Activated naive CD4-positive, alpha-beta T cell treated with anti-CD3 and anti-CD28 coated beads for 36 hours (primary cell): ENCODE measurements at regions of chr2 and their contacts with region 1.

Region 1: DNA sequence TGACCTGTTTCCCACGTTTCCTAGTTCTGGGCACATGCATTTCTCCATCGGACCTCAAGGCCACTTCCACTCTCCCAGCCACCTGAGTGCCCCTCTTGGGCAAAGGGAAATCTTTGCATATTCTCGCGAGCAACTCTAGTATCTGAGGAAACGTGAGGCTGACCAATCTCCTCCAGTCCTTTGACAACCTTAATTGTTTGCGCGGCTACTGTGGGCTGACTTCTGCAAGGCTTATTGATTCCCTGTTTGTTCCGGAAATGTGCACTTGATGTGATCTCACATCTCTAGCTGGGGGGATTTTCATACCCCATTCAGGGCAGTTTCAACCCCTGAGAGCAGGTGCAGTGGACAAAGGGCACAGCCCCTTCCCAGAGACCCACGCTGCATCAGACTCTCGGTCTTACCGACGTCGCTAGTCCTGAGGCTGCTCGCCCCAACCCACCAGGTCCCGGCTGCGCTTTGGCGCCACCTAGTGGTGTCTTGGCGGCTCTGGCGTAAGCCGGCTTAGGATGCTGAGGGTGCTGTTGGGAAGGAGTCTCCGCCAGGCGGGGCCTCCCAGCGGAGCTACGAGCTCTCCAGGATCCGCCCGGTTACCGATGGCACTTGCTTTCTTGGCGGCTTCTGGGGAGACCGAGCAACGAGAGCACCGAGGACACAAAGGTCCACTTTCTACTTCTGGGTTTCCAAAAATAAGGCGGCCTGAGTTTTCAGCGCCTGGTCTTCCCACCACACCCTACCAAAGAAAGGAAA is 24.8 kb upstream of the SPR start:
- DNase-seq: peak; percentile 91
- H3K4me3 Mint-ChIP-seq: peak overlapping the region; percentile 31
- H3K27ac Mint-ChIP-seq: no peak overlapping the region
- H3K4me1 Mint-ChIP-seq: peaks cover 10% of the 10 kb centered on the region
- H3K27me3 Mint-ChIP-seq: peaks cover 49% of the 10 kb centered on the region

Region 2: GRCh38 chr2:71923887-71924533 is 938.4 kb before region 1 on chr2:
- CTCF ChIA-PET with region 1: no interaction called
- intact Hi-C with region 1: loop called (anchors 5 kb)
- DNase-seq: peak; percentile 75
- H3K4me3 Mint-ChIP-seq: no peak overlapping the region
- H3K27ac Mint-ChIP-seq: no peak overlapping the region
- H3K4me1 Mint-ChIP-seq: no peaks in the 10 kb centered on the region
- H3K27me3 Mint-ChIP-seq: no peaks in the 10 kb centered on the region

Region 3: GRCh38 chr2:72367530-72368225 is 494.7 kb before region 1 on chr2:
- CTCF ChIA-PET with region 1: no interaction called
- intact Hi-C with region 1: no loop called
- DNase-seq: no peak
- H3K4me3 Mint-ChIP-seq: no peak overlapping the region
- H3K27ac Mint-ChIP-seq: no peak overlapping the region
- H3K4me1 Mint-ChIP-seq: no peaks in the 10 kb centered on the region
- H3K27me3 Mint-ChIP-seq: no peaks in the 10 kb centered on the region

Region 4: DNA sequence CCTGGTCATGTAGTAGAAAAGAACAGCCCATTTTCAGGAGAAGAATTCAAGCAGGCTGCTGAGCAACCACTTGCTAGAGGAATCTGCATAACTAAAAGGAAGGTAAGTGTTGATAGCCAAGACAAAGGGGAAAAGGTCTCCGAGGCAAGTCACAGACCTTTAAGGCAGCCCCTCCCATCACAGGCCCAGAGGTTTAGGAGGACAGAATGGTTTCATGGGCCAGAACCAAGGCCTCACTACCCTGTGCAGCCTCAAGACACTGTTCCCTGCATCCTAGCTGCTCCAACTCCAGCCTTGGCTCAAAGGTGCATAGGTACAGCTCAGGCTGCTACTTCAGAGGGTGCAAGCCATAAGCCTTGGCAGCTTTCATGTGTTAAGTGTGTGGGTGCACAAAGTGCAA is 476.1 kb before region 1 on chr2:
- CTCF ChIA-PET with region 1: no interaction called
- intact Hi-C with region 1: no loop called
- DNase-seq: no peak
- H3K4me3 Mint-ChIP-seq: no peak overlapping the region
- H3K27ac Mint-ChIP-seq: no peak overlapping the region
- H3K4me1 Mint-ChIP-seq: no peaks in the 10 kb centered on the region
- H3K27me3 Mint-ChIP-seq: no peaks in the 10 kb centered on the region

Region 5: GRCh38 chr2:72605836-72606442 is 256.5 kb before region 1 on chr2:
- CTCF ChIA-PET with region 1: no interaction called
- intact Hi-C with region 1: loop called (anchors 10 kb)
- DNase-seq: no peak
- H3K4me3 Mint-ChIP-seq: no peak overlapping the region
- H3K27ac Mint-ChIP-seq: no peak overlapping the region
- H3K4me1 Mint-ChIP-seq: peaks cover 13% of the 10 kb centered on the region
- H3K27me3 Mint-ChIP-seq: no peaks in the 10 kb centered on the region

Region 6: GRCh38 chr2:72825241-72826155 is 36.9 kb before region 1 on chr2 and contains the start of gene EXOC6B:
- CTCF ChIA-PET with region 1: interaction called, 5 read pairs
- intact Hi-C with region 1: loop called (anchors 1 kb)
- DNase-seq: peak; percentile 88
- H3K4me3 Mint-ChIP-seq: peak within 1 kb of the TSS; percentile 94
- H3K27ac Mint-ChIP-seq: no peak within 1 kb of the TSS
- H3K4me1 Mint-ChIP-seq: peaks cover 39% of the 10 kb centered on the region
- H3K27me3 Mint-ChIP-seq: peaks cover 2% of the 10 kb centered on the region
- total RNA-seq, gene EXOC6B: 6.1 to 7.5 TPM

Region 7: GRCh38 chr2:72915907-72916742 is 53.7 kb after region 1 on chr2:
- CTCF ChIA-PET with region 1: interaction called, 3 read pairs
- intact Hi-C with region 1: loop called (anchors 2 kb)
- DNase-seq: peak; percentile 53
- H3K4me3 Mint-ChIP-seq: peak overlapping the region; percentile 71
- H3K27ac Mint-ChIP-seq: no peak overlapping the region
- H3K4me1 Mint-ChIP-seq: peaks cover 30% of the 10 kb centered on the region
- H3K27me3 Mint-ChIP-seq: peaks cover 70% of the 10 kb centered on the region

Region 8: DNA sequence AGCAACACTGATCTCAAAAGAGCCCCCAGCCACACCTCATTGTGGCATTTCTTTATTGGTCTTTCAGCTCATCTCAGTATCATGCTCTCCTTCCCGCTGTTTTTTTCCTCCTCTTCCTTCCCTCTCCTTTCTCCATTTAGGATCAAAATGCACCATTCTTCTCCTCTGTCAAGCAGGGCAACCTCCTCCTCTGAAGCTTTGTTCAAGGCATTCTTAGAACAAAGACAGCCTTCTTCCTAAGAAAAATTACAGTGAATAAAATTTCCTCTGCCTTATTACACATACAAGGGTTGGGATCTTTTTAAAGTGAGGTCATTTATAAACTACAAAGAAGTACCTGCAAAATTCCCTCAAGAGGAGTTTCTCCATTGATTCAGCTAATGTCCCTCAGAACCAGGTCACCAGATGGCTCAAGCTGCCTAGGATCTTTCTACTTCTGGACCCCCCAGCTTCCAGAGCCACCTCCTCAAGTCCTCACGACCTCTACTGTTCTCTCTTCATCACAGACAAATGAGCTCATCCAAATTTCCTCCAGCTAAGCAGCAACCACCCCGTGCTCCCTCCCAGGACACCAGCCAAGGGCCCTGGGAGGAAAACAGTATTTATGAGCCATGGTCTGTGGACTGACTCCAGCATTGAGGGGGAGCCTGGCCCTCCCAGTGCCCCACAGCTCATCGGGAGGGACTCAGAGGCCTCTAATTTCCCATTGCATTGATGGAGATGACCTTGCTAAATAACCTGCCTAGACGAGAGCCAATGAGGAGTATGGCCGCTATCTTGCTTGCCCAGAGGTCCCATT is 191.1 kb after region 1 on chr2:
- CTCF ChIA-PET with region 1: no interaction called
- intact Hi-C with region 1: no loop called
- DNase-seq: no peak
- H3K4me3 Mint-ChIP-seq: no peak overlapping the region
- H3K27ac Mint-ChIP-seq: no peak overlapping the region
- H3K4me1 Mint-ChIP-seq: no peaks in the 10 kb centered on the region
- H3K27me3 Mint-ChIP-seq: no peaks in the 10 kb centered on the region

Region 9: GRCh38 chr2:73233154-73233931 is 370.9 kb after region 1 on chr2 and contains the start of gene PRADC1:
- CTCF ChIA-PET with region 1: no interaction called
- intact Hi-C with region 1: no loop called
- DNase-seq: peak; percentile 97
- H3K4me3 Mint-ChIP-seq: peak within 1 kb of the TSS; percentile 88
- H3K27ac Mint-ChIP-seq: peak within 1 kb of the TSS; percentile 77
- H3K4me1 Mint-ChIP-seq: peaks cover 31% of the 10 kb centered on the region
- H3K27me3 Mint-ChIP-seq: no peaks in the 10 kb centered on the region
- total RNA-seq, gene PRADC1: 10.1 to 10.2 TPM